ENCODE measurements at regions of chr4 and their contacts with region 1.

Region 1: DNA sequence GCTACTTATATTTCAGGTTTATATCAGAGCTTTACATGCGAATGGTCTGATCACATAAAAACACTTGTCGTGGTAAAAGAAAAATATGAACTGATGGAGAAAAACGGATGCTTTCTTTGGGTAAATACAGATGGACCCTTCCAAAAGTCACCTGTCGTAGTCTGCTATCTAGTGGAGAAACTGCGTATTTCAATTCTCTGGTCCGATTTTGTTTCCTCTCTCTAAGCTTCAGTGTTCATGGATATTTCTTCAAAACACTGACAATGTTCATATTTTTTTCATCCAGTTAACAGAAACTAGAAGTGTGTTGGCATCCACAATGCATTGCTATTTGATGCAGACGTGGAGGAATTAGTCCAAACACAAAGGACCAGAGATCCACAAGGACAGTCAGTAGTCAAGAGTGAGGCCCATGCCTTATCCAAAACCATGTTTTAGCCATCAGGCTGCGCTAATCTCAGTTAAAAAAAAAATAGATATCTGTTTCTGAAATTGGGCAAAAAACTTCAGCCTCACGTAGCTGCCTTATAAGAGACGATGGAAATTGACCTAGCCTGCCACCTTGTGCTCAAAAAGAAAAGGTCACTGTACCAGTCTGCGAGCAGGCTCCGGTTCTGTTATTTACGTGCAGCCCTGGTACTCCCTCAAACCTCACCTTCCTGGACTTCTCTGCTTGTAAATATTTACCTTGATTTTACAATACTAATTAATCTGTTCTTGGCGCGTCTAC is 16.0 kb downstream of the MEPE start:
- DNase-seq: peak; percentile 69 to 84 (median 84)
- H3K4me3 ChIP-seq: peak overlapping the region in 5 of 7 experiments; percentile 13 to 78 (median 44)
- H3K27ac ChIP-seq: no peak overlapping the region
- H3K4me1 ChIP-seq: peaks cover 9 to 41% (median 21%) of the 10 kb centered on the region in 4 experiments
- H3K27me3 ChIP-seq: peaks cover 0 to 1% (median 0%) of the 10 kb centered on the region in 5 experiments

Region 2: GRCh38 chr4:87543835-87544461 is 304.8 kb before region 1 on chr4:
- CTCF ChIA-PET with region 1: interaction called, 16 read pairs
- POLR2A ChIA-PET with region 1: no interaction called
- DNase-seq: peak; percentile 29 to 50 (median 48)
- H3K4me3 ChIP-seq: no peak overlapping the region
- H3K27ac ChIP-seq: no peak overlapping the region
- H3K4me1 ChIP-seq: no peaks in the 10 kb centered on the region
- H3K27me3 ChIP-seq: no peaks in the 10 kb centered on the region

Region 3: GRCh38 chr4:87865960-87866598 is 17.3 kb after region 1 on chr4:
- CTCF ChIA-PET with region 1: interaction called, 22 read pairs
- POLR2A ChIA-PET with region 1: no interaction called
- DNase-seq: peak in 2 of 3 donors; percentile 37 to 52
- H3K4me3 ChIP-seq: no peak overlapping the region
- H3K27ac ChIP-seq: no peak overlapping the region
- H3K4me1 ChIP-seq: peaks cover 7 to 22% (median 14%) of the 10 kb centered on the region in 4 experiments
- H3K27me3 ChIP-seq: no peaks in the 10 kb centered on the region

Region 4: DNA sequence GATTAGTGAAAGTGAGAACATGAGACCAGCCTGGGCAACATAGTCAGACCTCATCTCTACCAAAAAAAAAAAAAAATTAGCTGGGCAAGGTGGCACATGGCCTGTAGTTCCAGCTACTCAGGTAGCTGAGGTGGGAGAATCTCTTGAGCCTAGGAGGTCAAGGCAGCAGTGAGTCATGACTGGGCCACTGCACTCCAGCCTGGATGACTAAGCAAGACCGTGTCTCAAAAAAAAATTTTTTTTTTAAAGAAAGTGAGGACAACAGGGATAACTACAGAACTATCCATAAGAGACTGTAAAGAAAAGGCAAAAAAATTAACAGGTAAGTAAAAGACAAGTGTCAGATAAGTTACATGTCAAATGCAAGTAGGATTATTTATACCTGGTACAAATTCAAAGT is 113.2 kb after region 1 on chr4:
- CTCF ChIA-PET with region 1: interaction called, 15 read pairs
- POLR2A ChIA-PET with region 1: no interaction called
- DNase-seq: peak in 2 of 3 donors; percentile 31 to 45
- H3K4me3 ChIP-seq: no peak overlapping the region
- H3K27ac ChIP-seq: no peak overlapping the region
- H3K4me1 ChIP-seq: peaks cover 0 to 5% (median 4%) of the 10 kb centered on the region in 4 experiments
- H3K27me3 ChIP-seq: no peaks in the 10 kb centered on the region

Region 5: GRCh38 chr4:87985097-87985886 is 136.5 kb after region 1 on chr4:
- CTCF ChIA-PET with region 1: interaction called, 32 read pairs
- POLR2A ChIA-PET with region 1: no interaction called
- DNase-seq: peak; percentile 54 to 73 (median 69)
- H3K4me3 ChIP-seq: no peak overlapping the region
- H3K27ac ChIP-seq: no peak overlapping the region
- H3K4me1 ChIP-seq: peaks cover 0 to 2% (median 0%) of the 10 kb centered on the region in 4 experiments
- H3K27me3 ChIP-seq: no peaks in the 10 kb centered on the region

Region 6: GRCh38 chr4:89528526-89529133 is 1679.8 kb after region 1 on chr4:
- CTCF ChIA-PET with region 1: no interaction called
- POLR2A ChIA-PET with region 1: no interaction called
- DNase-seq: peak; percentile 36 to 94 (median 89)
- H3K4me3 ChIP-seq: peak overlapping the region in 1 of 7 experiments; percentile 7
- H3K27ac ChIP-seq: no peak overlapping the region
- H3K4me1 ChIP-seq: peaks cover 2 to 12% (median 9%) of the 10 kb centered on the region in 4 experiments
- H3K27me3 ChIP-seq: no peaks in the 10 kb centered on the region

Measured in common myeloid progenitor, CD34-positive (primary cell).